GM10248 (cell line): ENCODE measurements at regions of chr11 and their contacts with region 1.

Region 1: GRCh38 chr11:65662799-65663638 is at the start of gene RELA:
- DNase-seq: peak; percentile 95
- CTCF ChIP-seq: no peak

Region 2: GRCh38 chr11:64419818-64420485 is 1243.1 kb before region 1 on chr11:
- CTCF ChIA-PET with region 1: no interaction called
- POLR2A ChIA-PET with region 1: interaction called, 10 read pairs
- DNase-seq: no peak
- CTCF ChIP-seq: no peak

Region 3: GRCh38 chr11:65619281-65619928 is 43.6 kb before region 1 on chr11:
- CTCF ChIA-PET with region 1: no interaction called
- POLR2A ChIA-PET with region 1: no interaction called
- DNase-seq: no peak
- CTCF ChIP-seq: no peak